AG04450 (cell line): ENCODE measurements at regions of chr10 and their contacts with region 1.

Region 1: GRCh38 chr10:12902135-12902572 is 99.4 kb downstream of the CCDC3 start:
- DNase-seq: peak; percentile 30
- H3K4me3 ChIP-seq: no peak overlapping the region
- H3K27ac ChIP-seq: no peak overlapping the region
- H3K27me3 ChIP-seq: no peaks in the 10 kb centered on the region
- CTCF ChIP-seq: peak; percentile 82

Region 2: DNA sequence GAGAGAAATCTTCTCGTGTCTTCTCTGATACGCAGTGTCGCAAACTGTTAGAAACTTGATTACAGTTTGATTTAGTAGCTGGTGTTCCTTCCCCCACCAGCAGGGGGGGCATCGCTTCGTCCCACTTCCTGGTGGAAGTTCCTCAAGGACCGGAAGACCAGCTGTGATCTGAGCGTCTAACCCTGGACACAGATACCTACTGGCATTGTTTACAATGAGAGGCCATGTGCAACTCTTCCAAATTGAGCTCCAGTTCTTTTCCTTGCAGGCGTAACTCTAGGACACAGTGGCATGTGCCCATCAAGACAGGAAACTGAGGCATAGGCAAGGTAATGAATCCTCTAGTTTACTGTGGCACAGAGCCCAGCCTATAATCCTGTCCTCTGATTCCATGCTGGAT is 119.6 kb before region 1 on chr10:
- CTCF ChIA-PET with region 1: interaction called, 29 read pairs
- POLR2A ChIA-PET with region 1: no interaction called
- DNase-seq: no peak
- H3K4me3 ChIP-seq: no peak overlapping the region
- H3K27ac ChIP-seq: no peak overlapping the region
- H3K27me3 ChIP-seq: no peaks in the 10 kb centered on the region
- CTCF ChIP-seq: peak; percentile 67

Region 3: GRCh38 chr10:12888470-12888869 is 13.7 kb before region 1 on chr10:
- CTCF ChIA-PET with region 1: interaction called, 10 read pairs
- POLR2A ChIA-PET with region 1: no interaction called
- DNase-seq: no peak
- H3K4me3 ChIP-seq: no peak overlapping the region
- H3K27ac ChIP-seq: no peak overlapping the region
- H3K27me3 ChIP-seq: peaks cover 11% of the 10 kb centered on the region
- CTCF ChIP-seq: no peak

Region 4: GRCh38 chr10:13056456-13057077 is 154.4 kb after region 1 on chr10:
- CTCF ChIA-PET with region 1: interaction called, 10 read pairs
- POLR2A ChIA-PET with region 1: no interaction called
- DNase-seq: peak; percentile 4
- H3K4me3 ChIP-seq: no peak overlapping the region
- H3K27ac ChIP-seq: no peak overlapping the region
- H3K27me3 ChIP-seq: peaks cover 5% of the 10 kb centered on the region
- CTCF ChIP-seq: peak; percentile 64

Region 5: GRCh38 chr10:13074561-13075451 is 172.7 kb after region 1 on chr10:
- CTCF ChIA-PET with region 1: interaction called, 13 read pairs
- POLR2A ChIA-PET with region 1: no interaction called
- DNase-seq: peak; percentile 21
- H3K4me3 ChIP-seq: no peak overlapping the region
- H3K27ac ChIP-seq: no peak overlapping the region
- H3K27me3 ChIP-seq: peaks cover 4% of the 10 kb centered on the region
- CTCF ChIP-seq: peak; percentile 89